ENCODE measurements at regions of chr2 and their contacts with region 1.

Region 1: GRCh38 chr2:203446071-203446481 is 89.0 kb downstream of the RAPH1 start:
- DNase-seq: no peak
- ATAC-seq: no peak

Region 2: DNA sequence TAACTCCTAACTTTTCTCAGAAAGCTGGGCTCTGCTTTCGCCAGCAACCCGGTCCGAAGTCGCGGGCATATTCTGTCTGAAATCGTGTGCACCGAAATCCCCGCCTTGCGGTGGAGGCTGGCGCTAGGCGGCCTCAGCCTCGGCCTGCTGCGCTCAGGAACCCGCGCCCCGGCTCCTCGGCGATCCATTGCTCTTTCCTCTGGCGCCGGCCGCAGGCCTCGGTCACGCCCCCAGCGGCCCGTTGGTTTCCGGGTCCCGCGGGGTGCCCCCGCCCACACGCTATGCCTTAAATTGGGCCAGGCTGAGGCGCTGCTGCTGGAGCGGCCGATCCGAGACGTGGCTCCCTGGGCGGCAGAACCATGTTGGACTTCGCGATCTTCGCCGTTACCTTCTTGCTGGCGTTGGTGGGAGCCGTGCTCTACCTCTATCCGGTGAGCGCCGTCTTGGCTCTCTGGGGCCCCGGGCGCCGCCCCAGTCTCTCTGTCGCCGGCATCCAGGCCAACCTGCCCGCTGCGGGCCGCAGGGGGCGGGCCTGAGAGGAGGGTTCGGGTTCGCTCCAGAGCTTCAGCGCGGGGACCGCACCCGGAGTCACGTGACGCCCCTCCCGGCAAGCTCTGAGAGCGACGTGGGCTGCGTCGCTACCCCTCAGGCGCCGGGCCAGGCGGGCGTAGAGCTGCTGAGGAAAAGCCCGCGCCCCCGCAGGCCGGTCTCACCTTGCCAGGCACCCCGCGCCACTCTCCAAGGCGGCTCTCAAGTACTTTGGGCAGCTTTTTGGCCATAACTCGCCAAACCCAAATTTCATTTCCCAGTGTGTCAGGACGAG is 207.2 kb before region 1 on chr2 and contains the start of gene CYP20A1:
- intact Hi-C with region 1: loop called (anchors 5 kb)
- DNase-seq: peak; percentile 98
- ATAC-seq: peak; percentile 99
- total RNA-seq, gene CYP20A1: 11.4 TPM